OCI-LY7 (cell line): ENCODE measurements at regions of chr15 and their contacts with region 1.

Region 1: DNA sequence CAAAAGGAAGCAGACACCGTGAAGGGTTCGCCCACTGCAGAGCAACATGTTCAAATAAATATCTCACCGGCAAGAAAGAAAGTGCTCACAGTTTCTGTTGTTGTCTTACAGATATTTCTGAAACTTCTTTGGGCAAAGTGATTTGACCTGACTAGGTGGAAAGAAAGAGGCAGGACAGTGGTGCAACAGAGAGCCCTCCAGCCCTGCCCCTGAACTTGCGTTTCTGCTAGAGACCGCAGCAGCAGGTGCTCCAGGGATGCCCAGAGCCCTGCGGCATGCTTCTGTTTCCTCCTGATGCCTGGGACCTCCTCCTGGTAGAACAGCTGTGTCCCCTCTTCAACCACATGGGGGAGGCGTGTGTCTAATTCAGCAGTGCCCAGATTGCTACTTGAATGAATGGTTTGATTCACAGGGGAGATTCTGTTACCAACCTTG is 123.4 kb downstream of the ATP10A start:
- DNase-seq: peak; percentile 72
- H3K4me3 ChIP-seq: no peak overlapping the region
- H3K27ac ChIP-seq: no peak overlapping the region
- H3K4me1 ChIP-seq: no peaks in the 10 kb centered on the region
- CTCF ChIP-seq: peak; percentile 76

Region 2: GRCh38 chr15:25527118-25527517 is 212.6 kb before region 1 on chr15:
- CTCF ChIA-PET with region 1: no interaction called
- POLR2A ChIA-PET with region 1: no interaction called
- intact Hi-C with region 1: no loop called
- DNase-seq: no peak
- H3K4me3 ChIP-seq: no peak overlapping the region
- H3K27ac ChIP-seq: no peak overlapping the region
- H3K4me1 ChIP-seq: no peaks in the 10 kb centered on the region
- CTCF ChIP-seq: no peak

Region 3: GRCh38 chr15:25671132-25671531 is 68.6 kb before region 1 on chr15:
- CTCF ChIA-PET with region 1: no interaction called
- POLR2A ChIA-PET with region 1: no interaction called
- intact Hi-C with region 1: no loop called
- DNase-seq: no peak
- H3K4me3 ChIP-seq: no peak overlapping the region
- H3K27ac ChIP-seq: no peak overlapping the region
- H3K4me1 ChIP-seq: no peaks in the 10 kb centered on the region
- CTCF ChIP-seq: no peak

Region 4: GRCh38 chr15:25717457-25718168 is 22.1 kb before region 1 on chr15:
- CTCF ChIA-PET with region 1: no interaction called
- POLR2A ChIA-PET with region 1: no interaction called
- intact Hi-C with region 1: loop called (anchors 2 kb)
- DNase-seq: no peak
- H3K4me3 ChIP-seq: no peak overlapping the region
- H3K27ac ChIP-seq: no peak overlapping the region
- H3K4me1 ChIP-seq: no peaks in the 10 kb centered on the region
- CTCF ChIP-seq: no peak

Region 5: GRCh38 chr15:25790000-25790660 is 50.4 kb after region 1 on chr15:
- CTCF ChIA-PET with region 1: no interaction called
- POLR2A ChIA-PET with region 1: no interaction called
- intact Hi-C with region 1: loop called (anchors 5 kb)
- DNase-seq: peak; percentile 34
- H3K4me3 ChIP-seq: no peak overlapping the region
- H3K27ac ChIP-seq: no peak overlapping the region
- H3K4me1 ChIP-seq: peaks cover 47% of the 10 kb centered on the region
- CTCF ChIP-seq: 0 out of 2 replicates have a peak, but pooled peaks have one; percentile 12

Region 6: DNA sequence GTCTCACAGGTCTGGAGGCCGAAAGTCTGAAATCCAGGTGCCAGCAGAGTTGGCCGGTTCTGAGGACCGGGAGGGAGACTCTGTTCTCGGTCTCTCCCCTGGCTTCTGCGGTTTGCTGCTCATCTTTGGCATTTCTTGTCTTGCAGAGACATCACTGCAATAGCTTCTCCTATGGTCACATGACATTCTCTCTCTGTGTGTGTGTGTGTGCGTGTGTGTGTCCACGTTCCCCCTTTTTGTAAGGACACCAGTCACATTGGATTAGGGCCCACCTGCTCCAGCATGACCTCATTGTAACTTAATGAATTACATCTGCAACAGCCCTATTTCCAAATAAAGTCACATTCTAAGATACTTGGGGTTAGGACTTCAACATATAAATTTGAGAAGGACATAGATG is 135.9 kb after region 1 on chr15:
- CTCF ChIA-PET with region 1: no interaction called
- POLR2A ChIA-PET with region 1: no interaction called
- intact Hi-C with region 1: no loop called
- DNase-seq: no peak
- H3K4me3 ChIP-seq: no peak overlapping the region
- H3K27ac ChIP-seq: no peak overlapping the region
- H3K4me1 ChIP-seq: no peaks in the 10 kb centered on the region
- CTCF ChIP-seq: no peak